Tibial artery (tissue), 4 donors: ENCODE measurements at regions of chr7 and their contacts with region 1.

Region 1: GRCh38 chr7:128425850-128426249 is 16.1 kb upstream of the IMPDH1 start:
- DNase-seq: peak; percentile 78 to 80
- H3K4me3 ChIP-seq: no peak overlapping the region
- H3K27ac ChIP-seq: no peak overlapping the region
- H3K4me1 ChIP-seq: peaks cover 0 to 5% (median 2%) of the 10 kb centered on the region in 4 donors
- H3K27me3 ChIP-seq: peaks cover 0 to 13% of the 10 kb centered on the region in 2 donors
- CTCF ChIP-seq: peak; percentile 81 to 87

Region 2: GRCh38 chr7:128266883-128267607 is 158.8 kb before region 1 on chr7:
- intact Hi-C with region 1: no loop called
- DNase-seq: peak; percentile 39 to 74
- H3K4me3 ChIP-seq: peak overlapping the region; percentile 11 to 38
- H3K27ac ChIP-seq: peak overlapping the region; percentile 42 to 46
- H3K4me1 ChIP-seq: peaks cover 0 to 32% (median 27%) of the 10 kb centered on the region in 4 donors
- H3K27me3 ChIP-seq: peaks cover 0 to 19% of the 10 kb centered on the region in 2 donors
- CTCF ChIP-seq: no peak

Region 3: GRCh38 chr7:128399991-128400390 is 25.9 kb before region 1 on chr7:
- intact Hi-C with region 1: loop called (anchors 2 kb)
- DNase-seq: no peak
- H3K4me3 ChIP-seq: no peak overlapping the region
- H3K27ac ChIP-seq: no peak overlapping the region
- H3K4me1 ChIP-seq: peaks cover 0 to 14% (median 8%) of the 10 kb centered on the region in 4 donors
- H3K27me3 ChIP-seq: no peaks in the 10 kb centered on the region
- CTCF ChIP-seq: no peak

Region 4: DNA sequence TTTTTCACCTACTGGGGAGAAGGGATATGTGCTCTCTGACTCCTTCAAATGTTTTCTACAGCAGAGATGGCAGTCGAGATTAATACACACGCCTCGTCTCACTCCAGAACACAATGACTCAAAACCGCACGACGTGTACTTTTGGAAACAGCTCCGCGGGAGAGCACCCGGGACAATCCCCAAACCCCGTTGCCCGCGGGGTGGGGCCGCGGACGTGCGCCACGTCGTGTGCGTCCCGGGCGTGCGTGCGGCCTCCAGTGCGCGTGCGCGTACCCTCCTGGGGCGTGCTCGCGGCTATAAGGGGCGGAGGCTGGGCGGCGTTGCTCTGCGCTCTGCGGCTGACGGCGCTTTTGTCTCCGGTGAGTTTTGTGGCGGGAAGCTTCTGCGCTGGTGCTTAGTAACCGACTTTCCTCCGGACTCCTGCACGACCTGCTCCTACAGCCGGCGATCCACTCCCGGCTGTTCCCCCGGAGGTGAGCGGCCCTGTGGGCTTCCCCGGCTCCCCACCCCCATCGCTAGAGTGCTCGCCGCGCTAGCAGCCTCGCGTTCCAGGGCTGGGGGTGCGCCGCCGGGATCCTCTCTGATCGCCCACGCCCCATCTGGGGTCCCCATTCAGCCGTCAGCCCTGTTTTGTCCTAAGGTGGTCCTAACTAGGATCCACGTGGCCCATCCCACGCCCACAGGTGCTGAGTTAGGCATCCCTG is 29.9 kb after region 1 on chr7 and contains the start of gene HILPDA:
- intact Hi-C with region 1: loop called (anchors 2 kb)
- DNase-seq: peak; percentile 93 to 97
- H3K4me3 ChIP-seq: peak within 1 kb of the TSS; percentile 65 to 85
- H3K27ac ChIP-seq: peak within 1 kb of the TSS; percentile 87 to 92
- H3K4me1 ChIP-seq: peaks cover 0 to 46% (median 42%) of the 10 kb centered on the region in 4 donors
- H3K27me3 ChIP-seq: no peaks in the 10 kb centered on the region
- CTCF ChIP-seq: no peak